Endothelial cell of umbilical vein (primary cell): ENCODE measurements at regions of chr1 and their contacts with region 1.

Region 1: DNA sequence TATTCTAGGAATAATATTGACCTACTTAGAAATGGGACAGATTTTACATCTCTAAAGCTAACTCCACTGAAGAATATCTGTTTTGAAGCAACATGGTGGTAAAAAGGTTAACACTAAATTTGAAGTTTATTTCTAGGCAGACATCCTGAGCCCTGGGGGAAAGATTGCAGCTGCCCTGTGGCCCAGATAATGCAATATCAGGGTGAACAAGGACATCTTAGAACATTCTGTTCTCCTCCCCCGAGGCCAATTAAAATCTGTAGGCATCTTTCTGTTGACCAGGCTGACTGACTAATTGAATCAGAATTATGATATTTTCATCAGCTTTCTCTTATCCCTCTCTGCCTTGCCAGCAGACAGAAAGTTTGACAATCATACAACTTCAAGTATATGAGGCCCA is 149.8 kb upstream of the DUSP10 start:
- DNase-seq: no peak
- H3K4me3 ChIP-seq: no peak overlapping the region
- H3K27ac ChIP-seq: no peak overlapping the region
- H3K4me1 ChIP-seq: no peaks in the 10 kb centered on the region
- H3K27me3 ChIP-seq: peaks cover 2 to 6% of the 10 kb centered on the region in 2 experiments
- CTCF ChIP-seq: no peak
- POLR2A ChIP-seq: no peak

Region 2: GRCh38 chr1:220272047-220272840 is 1619.5 kb before region 1 on chr1 and contains the start of gene RAB3GAP2:
- CTCF ChIA-PET with region 1: no interaction called
- POLR2A ChIA-PET with region 1: no interaction called
- dilution Hi-C with region 1: no loop called
- intact Hi-C with region 1: no loop called
- DNase-seq: peak; percentile 95
- H3K4me3 ChIP-seq: peak within 1 kb of the TSS; percentile 63 to 75 (median 63)
- H3K27ac ChIP-seq: peak within 1 kb of the TSS; percentile 72
- H3K4me1 ChIP-seq: peaks cover 14% of the 10 kb centered on the region
- H3K27me3 ChIP-seq: peaks cover 7 to 14% of the 10 kb centered on the region in 2 experiments
- CTCF ChIP-seq: no peak
- POLR2A ChIP-seq: peak; percentile 91
- total RNA-seq, gene RAB3GAP2: 37.0 and 37.4 TPM in 2 replicates

Region 3: DNA sequence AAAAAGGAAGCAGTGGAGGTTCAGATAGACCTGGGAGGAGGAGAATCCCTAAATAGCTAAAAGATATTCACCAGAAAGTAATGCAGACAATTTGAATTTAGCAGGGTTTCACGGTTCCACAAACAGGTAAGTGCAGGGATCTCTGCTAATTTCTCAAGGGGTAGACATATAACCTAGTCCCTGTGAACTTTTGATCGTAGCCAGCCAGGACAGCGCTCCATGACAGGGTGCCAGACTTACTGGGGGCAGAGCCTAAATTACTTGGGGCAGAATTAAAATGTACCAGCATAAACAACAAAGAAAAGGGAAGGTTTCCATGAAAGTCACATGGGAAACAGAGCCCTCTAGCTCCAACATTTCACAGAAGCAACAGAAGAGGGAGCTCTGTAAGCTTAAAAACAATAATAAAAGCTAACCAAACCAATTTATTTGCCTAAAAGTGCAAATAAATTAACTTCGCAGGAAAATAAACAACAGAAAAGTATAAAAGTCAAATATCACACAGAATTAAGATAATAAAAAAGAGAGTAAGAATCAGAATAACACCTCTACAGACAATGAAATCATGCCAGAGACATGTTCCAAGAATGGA is 348.1 kb before region 1 on chr1:
- CTCF ChIA-PET with region 1: interaction called, 14 read pairs
- POLR2A ChIA-PET with region 1: no interaction called
- dilution Hi-C with region 1: no loop called
- intact Hi-C with region 1: no loop called
- DNase-seq: peak; percentile 25
- H3K4me3 ChIP-seq: no peak overlapping the region
- H3K27ac ChIP-seq: no peak overlapping the region
- H3K4me1 ChIP-seq: no peaks in the 10 kb centered on the region
- H3K27me3 ChIP-seq: peaks cover 0 to 2% of the 10 kb centered on the region in 2 experiments
- CTCF ChIP-seq: peak in 1 of 2 donors; percentile 30
- POLR2A ChIP-seq: no peak